Ovary (tissue), 10 donors: ENCODE measurements at regions of chr15 and their contacts with region 1.

Region 1: DNA sequence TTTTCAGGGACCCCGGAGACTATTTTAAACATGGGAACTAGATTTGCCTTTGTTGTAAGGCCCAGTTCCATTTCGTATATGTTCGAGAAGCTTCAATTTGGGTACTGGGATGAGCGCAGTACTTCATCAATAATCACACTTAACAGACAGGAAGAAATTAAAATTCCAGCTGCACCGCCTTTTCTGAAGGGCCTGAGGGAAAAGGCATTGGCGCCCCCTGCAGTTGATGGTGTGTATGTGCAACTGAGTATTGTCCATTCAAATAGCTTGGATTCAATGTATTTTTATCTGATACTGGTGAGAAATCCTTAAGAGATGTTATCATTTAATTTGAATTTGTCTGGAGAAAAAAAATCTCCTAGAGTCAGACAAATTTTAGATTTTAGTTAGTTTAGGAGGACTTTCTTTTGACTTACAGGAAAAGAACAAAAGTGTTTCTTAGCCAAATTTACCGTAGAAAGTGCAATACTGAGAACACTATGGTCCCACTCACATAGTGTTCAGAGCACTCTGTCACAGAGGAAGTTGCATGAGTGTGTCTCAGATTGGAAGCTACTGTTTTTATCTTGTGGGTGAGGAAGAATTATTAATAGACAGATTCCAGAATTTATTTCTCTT is 5.4 kb upstream of the ALDH1A2 start:
- DNase-seq: peak; percentile 32 to 76 (median 62)
- H3K4me3 ChIP-seq: no peak overlapping the region
- H3K27ac ChIP-seq: no peak overlapping the region
- H3K4me1 ChIP-seq: no peaks in the 10 kb centered on the region
- H3K27me3 ChIP-seq: no peaks in the 10 kb centered on the region
- CTCF ChIP-seq: peak; percentile 58 to 82 (median 74)
- EP300 ChIP-seq: no peak
- POLR2A ChIP-seq: no peak

Region 2: GRCh38 chr15:57122080-57122840 is 948.6 kb before region 1 on chr15:
- intact Hi-C with region 1: no loop called
- DNase-seq: no peak
- H3K4me3 ChIP-seq: no peak overlapping the region
- H3K27ac ChIP-seq: no peak overlapping the region
- H3K4me1 ChIP-seq: no peaks in the 10 kb centered on the region
- H3K27me3 ChIP-seq: no peaks in the 10 kb centered on the region
- CTCF ChIP-seq: no peak
- EP300 ChIP-seq: no peak
- POLR2A ChIP-seq: no peak

Region 3: GRCh38 chr15:57561041-57561711 is 509.7 kb before region 1 on chr15:
- intact Hi-C with region 1: loop called in 1 of 4 experiments (anchors 10 kb)
- DNase-seq: peak; percentile 75 to 81 (median 78)
- H3K4me3 ChIP-seq: no peak overlapping the region
- H3K27ac ChIP-seq: no peak overlapping the region
- H3K4me1 ChIP-seq: no peaks in the 10 kb centered on the region
- H3K27me3 ChIP-seq: no peaks in the 10 kb centered on the region
- CTCF ChIP-seq: peak; percentile 74 to 94 (median 82)
- EP300 ChIP-seq: no peak
- POLR2A ChIP-seq: no peak

Region 4: DNA sequence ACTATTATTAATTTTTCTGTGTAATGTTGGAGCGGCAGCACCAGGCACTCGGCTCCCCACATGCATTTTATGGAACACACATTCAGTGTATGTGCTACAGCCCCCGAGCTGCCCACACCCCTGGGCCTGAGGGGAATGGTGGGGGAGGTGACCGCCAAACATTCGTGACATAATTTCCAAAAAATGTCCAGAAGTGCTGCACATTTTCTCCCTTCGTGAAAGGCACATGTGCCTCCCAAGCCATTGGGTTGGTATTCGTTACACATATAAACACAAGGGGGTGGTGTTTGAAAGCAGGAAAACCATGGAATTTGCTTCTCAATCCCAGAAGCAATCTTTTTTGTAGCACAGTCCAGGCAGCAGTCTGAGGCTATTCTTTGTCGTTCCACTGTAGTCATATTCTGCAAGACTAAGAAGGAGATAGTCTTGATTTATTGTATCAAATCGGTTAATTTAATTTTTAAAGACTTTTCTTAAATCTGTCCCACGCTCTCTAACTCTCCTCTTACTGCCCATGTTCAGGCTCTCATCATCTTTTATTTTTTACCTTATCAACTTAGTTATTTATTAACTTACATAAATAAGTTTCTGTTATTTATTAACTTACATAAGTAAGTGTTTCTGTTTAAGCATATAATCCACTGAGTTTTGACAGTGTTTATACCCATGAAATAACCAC is 403.6 kb before region 1 on chr15:
- intact Hi-C with region 1: loop called in 3 of 4 experiments (anchors 10 kb)
- DNase-seq: peak in 2 of 5 donors; percentile 18 to 29
- H3K4me3 ChIP-seq: no peak overlapping the region
- H3K27ac ChIP-seq: no peak overlapping the region
- H3K4me1 ChIP-seq: peaks cover 2% of the 10 kb centered on the region
- H3K27me3 ChIP-seq: no peaks in the 10 kb centered on the region
- CTCF ChIP-seq: peak in 2 of 3 donors; percentile 24 to 32
- EP300 ChIP-seq: no peak
- POLR2A ChIP-seq: no peak

Region 5: DNA sequence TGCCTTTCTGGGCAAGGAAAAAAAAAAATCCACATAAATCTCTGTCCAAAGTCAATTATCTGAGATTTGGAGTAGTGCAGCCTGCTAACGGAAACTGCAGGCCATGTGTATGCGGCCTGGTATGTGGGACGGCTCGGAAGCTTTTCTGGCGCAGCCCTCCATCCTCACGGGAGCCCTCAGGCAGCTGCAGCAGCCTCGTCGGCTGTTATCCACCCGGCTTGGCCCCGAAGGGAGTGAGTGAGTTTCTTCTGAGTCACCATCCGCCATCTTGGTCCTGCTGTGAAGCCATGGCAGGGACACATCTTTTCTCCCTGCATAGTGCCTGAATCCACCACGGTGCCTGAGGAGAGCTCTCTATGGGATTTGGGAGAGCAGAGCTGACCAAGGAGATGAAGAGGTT is 301.6 kb before region 1 on chr15:
- intact Hi-C with region 1: no loop called
- DNase-seq: no peak
- H3K4me3 ChIP-seq: no peak overlapping the region
- H3K27ac ChIP-seq: no peak overlapping the region
- H3K4me1 ChIP-seq: no peaks in the 10 kb centered on the region
- H3K27me3 ChIP-seq: no peaks in the 10 kb centered on the region
- CTCF ChIP-seq: no peak
- EP300 ChIP-seq: no peak
- POLR2A ChIP-seq: no peak

Region 6: GRCh38 chr15:57861036-57861638 is 209.8 kb before region 1 on chr15:
- intact Hi-C with region 1: loop called in 3 of 4 experiments (anchors 2 to 10 kb)
- DNase-seq: no peak
- H3K4me3 ChIP-seq: no peak overlapping the region
- H3K27ac ChIP-seq: no peak overlapping the region
- H3K4me1 ChIP-seq: no peaks in the 10 kb centered on the region
- H3K27me3 ChIP-seq: no peaks in the 10 kb centered on the region
- CTCF ChIP-seq: peak; percentile 40 to 56 (median 48)
- EP300 ChIP-seq: no peak
- POLR2A ChIP-seq: no peak

Region 7: GRCh38 chr15:58019503-58020376 is 51.2 kb before region 1 on chr15:
- intact Hi-C with region 1: loop called in 1 of 4 experiments (anchors 10 kb)
- DNase-seq: no peak
- H3K4me3 ChIP-seq: no peak overlapping the region
- H3K27ac ChIP-seq: no peak overlapping the region
- H3K4me1 ChIP-seq: no peaks in the 10 kb centered on the region
- H3K27me3 ChIP-seq: no peaks in the 10 kb centered on the region
- CTCF ChIP-seq: no peak
- EP300 ChIP-seq: no peak
- POLR2A ChIP-seq: no peak

Region 8: GRCh38 chr15:58880320-58880719 is 809.4 kb after region 1 on chr15:
- intact Hi-C with region 1: no loop called
- DNase-seq: no peak
- H3K4me3 ChIP-seq: no peak overlapping the region
- H3K27ac ChIP-seq: no peak overlapping the region
- H3K4me1 ChIP-seq: no peaks in the 10 kb centered on the region
- H3K27me3 ChIP-seq: no peaks in the 10 kb centered on the region
- CTCF ChIP-seq: no peak
- EP300 ChIP-seq: no peak
- POLR2A ChIP-seq: no peak